CD8-positive, alpha-beta T cell (primary cell): ENCODE measurements at regions of chr7 and their contacts with region 1.

Region 1: GRCh38 chr7:115763347-115763746 is 267.2 kb downstream of the TFEC start:
- DNase-seq: no peak
- ATAC-seq: no peak
- H3K4me3 ChIP-seq: no peak overlapping the region
- H3K4me3 Mint-ChIP-seq: no peak overlapping the region
- H3K27ac ChIP-seq: no peak overlapping the region
- H3K27ac Mint-ChIP-seq: no peak overlapping the region
- H3K4me1 ChIP-seq: no peaks in the 10 kb centered on the region
- H3K4me1 Mint-ChIP-seq: no peaks in the 10 kb centered on the region
- H3K27me3 ChIP-seq: no peaks in the 10 kb centered on the region
- H3K27me3 Mint-ChIP-seq: no peaks in the 10 kb centered on the region
- CTCF ChIP-seq: no peak

Region 2: DNA sequence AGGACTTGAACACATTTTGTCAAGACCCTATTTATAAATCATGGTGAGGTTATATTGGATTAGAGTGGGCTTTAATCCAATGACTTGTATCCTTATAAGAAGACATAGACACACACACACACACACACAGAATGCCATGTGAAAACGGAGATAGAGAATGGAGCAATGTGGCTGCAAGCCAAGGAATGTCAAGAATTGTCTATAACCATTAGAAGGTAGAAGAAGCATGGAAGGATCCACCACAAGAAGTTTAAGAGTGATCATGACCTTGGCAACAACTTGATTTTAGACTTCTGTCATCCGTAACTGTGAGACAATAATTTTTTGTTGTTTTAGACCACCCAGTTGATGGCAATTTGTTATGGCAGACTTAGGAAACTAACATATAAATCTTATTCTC is 247.0 kb before region 1 on chr7:
- CTCF ChIA-PET with region 1: no interaction called
- POLR2A ChIA-PET with region 1: no interaction called
- intact Hi-C with region 1: no loop called
- DNase-seq: no peak
- ATAC-seq: no peak
- H3K4me3 ChIP-seq: no peak overlapping the region
- H3K4me3 Mint-ChIP-seq: no peak overlapping the region
- H3K27ac ChIP-seq: no peak overlapping the region
- H3K27ac Mint-ChIP-seq: no peak overlapping the region
- H3K4me1 ChIP-seq: no peaks in the 10 kb centered on the region
- H3K4me1 Mint-ChIP-seq: no peaks in the 10 kb centered on the region
- H3K27me3 ChIP-seq: no peaks in the 10 kb centered on the region
- H3K27me3 Mint-ChIP-seq: peaks cover 2% of the 10 kb centered on the region
- CTCF ChIP-seq: no peak

Region 3: DNA sequence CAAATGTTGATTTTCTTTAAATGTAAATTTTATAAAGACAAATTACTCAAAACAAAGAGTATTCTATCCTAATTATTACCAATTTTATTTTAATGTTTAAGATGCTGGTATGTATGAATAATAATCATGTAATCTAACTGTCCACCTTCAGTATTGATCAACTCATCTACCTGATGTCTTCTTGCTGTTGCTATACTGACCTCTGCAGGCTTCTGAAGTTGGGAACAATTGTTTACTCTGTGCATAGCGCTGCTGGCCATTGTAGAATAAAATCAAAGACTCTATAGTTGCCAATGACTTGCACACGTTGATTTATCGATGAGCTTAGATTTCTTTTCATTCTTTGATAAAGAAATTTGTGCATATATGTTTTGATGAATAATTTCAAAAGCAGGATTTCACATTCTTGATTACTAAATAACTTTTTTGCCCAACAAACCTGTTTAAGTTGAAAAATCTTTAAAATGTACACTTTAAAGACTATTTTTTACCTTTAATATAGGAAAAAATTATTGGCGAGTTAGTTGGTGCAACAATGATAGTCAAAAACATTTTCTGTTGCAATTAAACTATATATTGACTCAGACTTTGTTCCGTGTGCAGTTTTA is 15.1 kb before region 1 on chr7:
- CTCF ChIA-PET with region 1: no interaction called
- POLR2A ChIA-PET with region 1: no interaction called
- intact Hi-C with region 1: no loop called
- DNase-seq: peak in 2 of 9 experiments; percentile 18 to 20
- ATAC-seq: no peak
- H3K4me3 ChIP-seq: no peak overlapping the region
- H3K4me3 Mint-ChIP-seq: no peak overlapping the region
- H3K27ac ChIP-seq: no peak overlapping the region
- H3K27ac Mint-ChIP-seq: no peak overlapping the region
- H3K4me1 ChIP-seq: no peaks in the 10 kb centered on the region
- H3K4me1 Mint-ChIP-seq: no peaks in the 10 kb centered on the region
- H3K27me3 ChIP-seq: no peaks in the 10 kb centered on the region
- H3K27me3 Mint-ChIP-seq: no peaks in the 10 kb centered on the region
- CTCF ChIP-seq: no peak

Region 4: DNA sequence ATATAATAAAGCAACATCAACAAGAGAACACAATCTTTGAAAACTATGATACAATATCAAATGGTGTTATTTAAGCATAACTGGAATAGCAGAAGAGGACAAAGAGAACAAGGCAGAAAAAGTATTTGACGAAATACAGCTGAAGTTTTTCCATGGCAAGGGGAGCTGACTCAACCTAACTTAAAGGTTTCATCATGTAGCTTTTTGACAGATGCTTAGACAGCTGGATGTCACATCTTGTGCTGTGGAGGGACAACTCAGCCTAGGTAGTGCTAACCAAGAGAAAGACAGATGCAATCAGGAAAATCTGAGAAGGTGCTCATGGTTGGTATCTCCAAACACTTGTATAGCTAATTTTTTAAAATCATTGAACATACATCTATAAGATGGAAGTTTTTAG is 59.0 kb after region 1 on chr7:
- CTCF ChIA-PET with region 1: no interaction called
- POLR2A ChIA-PET with region 1: no interaction called
- intact Hi-C with region 1: loop called in 1 of 2 experiments (anchors 2 kb)
- DNase-seq: no peak
- ATAC-seq: no peak
- H3K4me3 ChIP-seq: no peak overlapping the region
- H3K4me3 Mint-ChIP-seq: no peak overlapping the region
- H3K27ac ChIP-seq: no peak overlapping the region
- H3K27ac Mint-ChIP-seq: no peak overlapping the region
- H3K4me1 ChIP-seq: no peaks in the 10 kb centered on the region
- H3K4me1 Mint-ChIP-seq: no peaks in the 10 kb centered on the region
- H3K27me3 ChIP-seq: no peaks in the 10 kb centered on the region
- H3K27me3 Mint-ChIP-seq: no peaks in the 10 kb centered on the region
- CTCF ChIP-seq: no peak